Dorsolateral prefrontal cortex (tissue), 120 donors: ENCODE measurements at regions of chr10 and their contacts with region 1.

Region 1: GRCh38 chr10:35635576-35635975 is 6.5 kb downstream of the FZD8 start:
- DNase-seq: peak in 2 of 10 donors; percentile 25 to 57
- H3K4me3 ChIP-seq: peak overlapping the region in 1 of 59 donors; percentile 1
- H3K27ac ChIP-seq: no peak overlapping the region
- H3K27me3 ChIP-seq: no peaks in the 10 kb centered on the region
- CTCF ChIP-seq: peak; percentile 80 to 99 (median 96)

Region 2: GRCh38 chr10:35246770-35247343 is 388.7 kb before region 1 on chr10:
- intact Hi-C with region 1: loop called in 1 of 2 experiments (anchors 10 kb)
- DNase-seq: no peak
- H3K4me3 ChIP-seq: no peak overlapping the region
- H3K27ac ChIP-seq: no peak overlapping the region
- H3K27me3 ChIP-seq: no peaks in the 10 kb centered on the region
- CTCF ChIP-seq: no peak

Region 3: DNA sequence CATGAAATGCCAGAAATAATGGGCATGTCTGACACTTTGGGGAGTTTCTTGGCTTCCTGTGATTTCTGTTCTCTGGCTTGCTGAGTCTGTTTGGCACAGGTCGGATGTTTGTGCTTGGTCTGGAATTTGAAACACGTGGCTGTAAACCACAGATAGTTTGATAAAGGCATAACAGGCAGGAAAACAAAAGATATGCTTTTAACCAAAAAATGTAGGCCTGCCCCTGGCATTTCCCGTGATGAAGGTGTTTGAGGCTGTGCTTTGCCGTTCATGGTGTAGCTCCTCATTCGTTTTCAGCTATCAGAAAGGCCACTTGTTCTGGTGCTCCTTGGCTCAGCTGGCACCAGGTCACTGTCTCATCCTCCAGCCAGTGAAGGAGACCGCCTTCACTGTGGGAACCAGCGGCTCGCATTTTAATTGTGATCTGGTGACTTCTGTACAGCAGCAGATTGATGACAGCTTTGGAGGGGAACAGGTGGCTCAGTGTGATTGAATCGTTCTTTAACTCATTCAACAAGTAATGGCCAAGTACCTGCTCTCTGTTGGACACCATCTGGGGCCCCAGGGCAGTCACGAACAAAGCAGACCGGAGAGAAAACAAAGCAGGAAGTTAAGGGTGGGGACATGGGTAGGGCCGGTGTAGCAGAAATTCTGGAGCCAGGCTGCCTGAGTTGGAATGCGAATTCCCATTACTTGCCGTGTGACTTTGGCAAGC is 187.7 kb before region 1 on chr10:
- intact Hi-C with region 1: no loop called
- DNase-seq: no peak
- H3K4me3 ChIP-seq: peak overlapping the region in 6 of 59 donors; percentile 3 to 18 (median 4)
- H3K27ac ChIP-seq: peak overlapping the region in 56 of 59 donors; percentile 3 to 99 (median 78)
- H3K27me3 ChIP-seq: no peaks in the 10 kb centered on the region
- CTCF ChIP-seq: no peak

Region 4: DNA sequence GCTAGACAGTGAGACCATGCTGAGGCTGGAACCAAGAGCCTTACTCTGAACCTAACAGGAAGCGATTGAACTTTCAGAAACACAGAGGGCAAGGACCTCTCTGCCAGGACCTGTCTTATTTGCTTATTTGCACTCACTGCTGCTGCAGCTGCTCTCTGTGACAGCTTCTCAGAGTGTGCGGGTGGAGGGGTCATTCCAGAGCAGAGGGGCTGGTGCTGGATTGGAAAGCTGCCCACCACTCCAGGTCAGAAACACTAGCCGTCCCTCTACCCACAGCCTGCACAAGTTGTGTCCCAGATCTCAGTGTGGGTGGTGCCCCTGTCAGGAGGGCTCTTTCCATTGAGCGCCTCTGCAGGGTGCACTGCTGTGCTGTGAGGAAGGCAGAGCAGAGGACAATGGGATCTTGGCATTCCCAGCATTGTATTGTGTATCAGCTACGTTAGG is 173.1 kb before region 1 on chr10:
- intact Hi-C with region 1: loop called in 1 of 2 experiments (anchors 10 kb)
- DNase-seq: peak in 3 of 10 donors; percentile 56 to 65 (median 62)
- H3K4me3 ChIP-seq: peak overlapping the region in 6 of 59 donors; percentile 4 to 28 (median 14)
- H3K27ac ChIP-seq: peak overlapping the region; percentile 27 to 100 (median 92)
- H3K27me3 ChIP-seq: no peaks in the 10 kb centered on the region
- CTCF ChIP-seq: peak in 4 of 56 donors; percentile 11 to 31 (median 22)

Region 5: DNA sequence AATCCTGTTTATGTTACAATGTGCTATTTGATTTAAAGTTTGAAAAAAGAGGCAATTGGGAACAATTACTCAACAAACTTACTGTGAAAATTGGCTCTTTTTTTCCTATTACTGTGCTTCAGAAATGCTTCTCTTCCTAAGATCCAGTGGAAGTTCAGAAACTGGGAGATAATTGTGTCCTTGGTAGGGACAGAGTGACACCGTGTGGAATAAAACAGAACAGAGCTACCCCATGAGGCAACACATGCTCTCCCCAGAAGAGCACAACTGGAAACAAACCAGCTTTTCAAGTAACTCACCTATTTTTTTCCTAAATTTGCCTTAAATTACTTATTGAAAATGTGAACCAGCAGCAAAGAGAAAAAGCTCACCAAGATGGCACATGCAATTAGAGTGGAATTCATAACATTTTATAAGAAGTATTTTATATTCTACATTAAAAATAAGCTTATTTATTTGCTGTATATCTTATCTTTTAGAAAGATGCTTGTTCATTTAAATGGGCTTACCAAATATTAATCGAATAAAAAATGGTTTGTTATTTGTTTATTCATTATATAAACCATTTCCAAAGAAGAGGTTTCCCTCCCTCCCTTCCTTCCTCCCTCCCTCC is 1143.8 kb after region 1 on chr10:
- intact Hi-C with region 1: loop called (anchors 1 to 2 kb)
- DNase-seq: peak in 1 of 10 donors; percentile 47
- H3K4me3 ChIP-seq: no peak overlapping the region
- H3K27ac ChIP-seq: no peak overlapping the region
- H3K27me3 ChIP-seq: peaks cover 0 to 10% (median 0%) of the 10 kb centered on the region in 45 donors
- CTCF ChIP-seq: peak; percentile 28 to 96 (median 80)

Region 6: DNA sequence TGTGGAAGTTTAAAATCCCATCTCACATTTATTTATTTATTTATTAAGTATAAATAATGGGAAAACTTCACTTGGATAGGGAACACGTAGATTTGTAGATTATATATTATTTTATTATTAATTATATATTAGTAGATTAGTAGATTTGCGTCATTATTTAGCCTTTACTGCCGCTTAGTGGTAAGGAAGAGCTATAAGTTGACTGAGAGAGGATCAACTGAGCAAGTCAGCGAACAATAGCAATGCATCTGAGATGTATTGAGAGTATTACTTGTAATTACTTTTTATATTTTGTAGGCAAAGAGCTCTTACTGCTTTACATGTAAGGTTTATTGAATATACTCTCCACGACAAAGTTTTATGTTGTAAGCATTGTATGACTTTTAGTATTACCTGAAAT is 1245.3 kb after region 1 on chr10:
- intact Hi-C with region 1: loop called in 1 of 2 experiments (anchors 5 kb)
- DNase-seq: no peak
- H3K4me3 ChIP-seq: no peak overlapping the region
- H3K27ac ChIP-seq: no peak overlapping the region
- H3K27me3 ChIP-seq: peaks cover 0 to 7% (median 0%) of the 10 kb centered on the region in 45 donors
- CTCF ChIP-seq: peak in 49 of 56 donors; percentile 3 to 69 (median 41)